Colonic mucosa (tissue), 4 donors: ENCODE measurements at regions of chr10 and their contacts with region 1.

Region 1: DNA sequence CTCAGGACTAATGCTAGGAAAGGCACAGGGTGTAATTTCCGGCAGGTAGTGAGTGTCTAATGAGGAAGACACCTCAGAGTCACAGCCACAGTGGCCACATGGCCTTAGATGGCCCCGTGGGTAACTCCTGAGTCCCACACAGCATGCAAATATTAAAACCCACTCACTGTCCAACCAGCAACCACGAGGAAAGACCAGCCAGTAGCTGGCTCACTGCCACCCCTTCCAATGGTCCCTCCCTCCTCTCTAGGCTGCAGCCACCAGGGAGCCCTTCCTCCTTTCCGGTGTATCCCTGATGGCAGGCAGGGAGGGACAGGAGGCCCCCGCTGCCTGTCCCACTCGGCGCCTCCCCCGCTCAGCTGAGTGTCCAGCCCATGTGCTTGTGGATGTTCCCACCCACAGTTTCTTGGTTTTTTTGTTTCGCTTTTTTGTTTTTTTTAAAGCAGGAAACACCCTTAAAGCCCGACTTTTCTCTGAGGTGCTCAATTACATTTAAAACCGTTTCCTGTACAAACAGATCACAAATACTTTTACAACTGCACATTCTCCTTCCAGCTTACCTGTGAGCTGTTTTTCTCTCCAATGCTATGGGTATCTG is 9.2 kb downstream of the BNIP3 start:
- DNase-seq: peak; percentile 40
- H3K4me3 ChIP-seq: no peak overlapping the region
- H3K27ac ChIP-seq: no peak overlapping the region
- H3K4me1 ChIP-seq: peaks cover 7% of the 10 kb centered on the region
- H3K27me3 ChIP-seq: no peaks in the 10 kb centered on the region
- CTCF ChIP-seq: no peak

Region 2: DNA sequence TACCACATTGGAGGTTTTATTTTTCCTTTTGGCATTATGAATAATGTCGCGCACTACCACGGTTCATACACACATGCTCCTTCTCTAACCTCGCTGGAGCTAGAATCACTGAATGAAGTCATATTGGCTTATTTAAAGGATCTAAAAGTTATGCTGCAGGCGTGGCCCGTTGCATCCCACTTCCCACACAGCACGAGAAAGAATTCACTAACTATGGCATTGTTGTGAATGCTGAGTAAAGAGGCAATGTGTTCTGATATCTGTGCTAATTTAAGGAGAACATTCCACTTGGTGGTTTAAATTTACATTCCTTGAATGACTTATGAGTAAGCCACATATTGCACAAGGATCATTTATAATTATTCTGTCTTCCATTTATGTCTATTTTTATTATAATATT is 681.8 kb before region 1 on chr10:
- intact Hi-C with region 1: no loop called
- DNase-seq: no peak
- H3K4me3 ChIP-seq: no peak overlapping the region
- H3K27ac ChIP-seq: no peak overlapping the region
- H3K4me1 ChIP-seq: no peaks in the 10 kb centered on the region
- H3K27me3 ChIP-seq: no peaks in the 10 kb centered on the region
- CTCF ChIP-seq: no peak

Region 3: GRCh38 chr10:131899695-131900349 is 72.8 kb before region 1 on chr10:
- intact Hi-C with region 1: loop called (anchors 10 kb)
- DNase-seq: no peak
- H3K4me3 ChIP-seq: peak overlapping the region; percentile 91
- H3K27ac ChIP-seq: no peak overlapping the region
- H3K4me1 ChIP-seq: peaks cover 8% of the 10 kb centered on the region
- H3K27me3 ChIP-seq: no peaks in the 10 kb centered on the region
- CTCF ChIP-seq: no peak

Region 4: DNA sequence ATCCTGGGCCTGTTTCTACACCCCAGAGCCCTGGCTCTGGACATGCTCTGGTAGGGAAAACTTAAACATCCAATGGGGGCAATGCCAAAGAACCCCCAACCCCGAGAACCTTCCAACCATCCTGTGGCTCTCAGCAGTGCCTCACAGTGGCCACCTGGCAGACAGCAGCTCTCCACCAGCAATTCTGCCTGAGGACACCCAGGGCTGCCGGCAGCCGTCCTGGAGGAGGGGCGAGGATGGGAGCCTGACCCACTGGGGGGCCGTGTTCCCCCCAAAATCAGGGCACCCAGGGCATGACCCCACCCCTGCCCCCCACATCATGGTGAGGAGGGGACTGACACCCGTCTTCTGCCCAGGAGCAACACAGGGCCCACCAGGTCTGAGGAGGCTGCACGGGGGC is 246.9 kb after region 1 on chr10:
- intact Hi-C with region 1: no loop called
- DNase-seq: no peak
- H3K4me3 ChIP-seq: no peak overlapping the region
- H3K27ac ChIP-seq: no peak overlapping the region
- H3K4me1 ChIP-seq: no peaks in the 10 kb centered on the region
- H3K27me3 ChIP-seq: no peaks in the 10 kb centered on the region
- CTCF ChIP-seq: no peak